Natural killer cell (primary cell): ENCODE measurements at regions of chr5 and their contacts with region 1.

Region 1: GRCh38 chr5:143403593-143404415 is at the start of gene NR3C1:
- DNase-seq: peak; percentile 87 to 95
- ATAC-seq: peak; percentile 71 to 89 (median 76)
- H3K4me3 ChIP-seq: peak within 1 kb of the TSS; percentile 77
- H3K4me3 Mint-ChIP-seq: peak within 1 kb of the TSS; percentile 97
- H3K27ac ChIP-seq: peak within 1 kb of the TSS; percentile 95
- H3K27ac Mint-ChIP-seq: peak within 1 kb of the TSS; percentile 97 to 99
- H3K4me1 ChIP-seq: peaks cover 24% of the 10 kb centered on the region
- H3K4me1 Mint-ChIP-seq: peaks cover 50 to 57% of the 10 kb centered on the region in 2 donors
- H3K27me3 ChIP-seq: no peaks in the 10 kb centered on the region
- H3K27me3 Mint-ChIP-seq: no peaks in the 10 kb centered on the region
- CTCF ChIP-seq: peak; percentile 45
- total RNA-seq, gene NR3C1: 147 to 168 (median 165) TPM

Region 2: GRCh38 chr5:142922223-142922952 is 481.4 kb before region 1 on chr5:
- intact Hi-C with region 1: loop called (anchors 5 kb)
- DNase-seq: peak in 1 of 2 donors; percentile 60
- ATAC-seq: peak; percentile 52 to 66 (median 59)
- H3K4me3 ChIP-seq: no peak overlapping the region
- H3K4me3 Mint-ChIP-seq: no peak overlapping the region
- H3K27ac ChIP-seq: peak overlapping the region; percentile 0
- H3K27ac Mint-ChIP-seq: peak overlapping the region; percentile 86 to 98
- H3K4me1 ChIP-seq: peaks cover 28% of the 10 kb centered on the region
- H3K4me1 Mint-ChIP-seq: peaks cover 52 to 53% of the 10 kb centered on the region in 2 donors
- H3K27me3 ChIP-seq: no peaks in the 10 kb centered on the region
- H3K27me3 Mint-ChIP-seq: no peaks in the 10 kb centered on the region
- CTCF ChIP-seq: peak; percentile 49

Region 3: DNA sequence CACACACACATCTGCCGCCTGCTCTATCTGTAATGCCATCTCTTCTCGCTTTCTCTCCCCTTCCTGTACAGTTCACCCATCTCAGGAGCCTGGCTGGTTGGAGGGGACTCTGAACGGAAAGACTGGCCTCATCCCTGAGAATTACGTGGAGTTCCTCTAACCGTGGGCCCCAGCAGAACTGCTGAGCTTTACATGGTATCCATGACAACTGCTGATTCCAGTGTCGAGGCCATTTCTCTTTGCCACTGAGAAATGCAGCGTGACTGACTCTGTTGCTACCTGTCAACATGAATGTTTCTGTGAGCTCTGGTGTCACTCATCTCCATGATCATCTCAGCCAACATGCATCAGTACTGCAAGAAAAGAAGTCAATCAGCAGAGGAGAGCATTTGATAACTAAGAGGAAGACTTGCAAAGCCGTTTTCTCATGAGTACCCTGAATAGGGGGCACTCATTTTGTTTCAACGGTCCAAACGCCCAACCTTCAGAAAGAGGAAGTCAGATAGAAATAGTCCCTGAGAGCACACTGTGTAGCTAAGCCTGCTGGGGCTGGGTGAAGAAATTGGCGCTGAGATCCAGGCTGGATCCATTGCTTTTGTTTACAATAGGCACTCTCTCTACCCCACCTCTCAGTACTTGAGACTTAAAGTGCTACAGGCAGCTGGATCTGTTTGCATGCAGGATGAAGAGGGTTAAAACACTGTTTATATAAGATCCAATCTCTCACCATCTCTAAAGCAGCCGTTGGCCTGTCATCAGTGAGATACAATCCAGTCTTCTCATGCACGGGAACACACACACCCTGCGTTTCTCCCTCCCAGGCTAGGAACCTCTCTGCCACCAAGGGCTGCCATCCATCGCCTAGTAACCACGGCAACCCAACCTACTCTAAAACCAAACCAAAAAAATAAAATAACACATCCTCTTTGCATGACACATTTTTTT is 181.2 kb before region 1 on chr5:
- intact Hi-C with region 1: loop called (anchors 2 kb)
- DNase-seq: peak; percentile 60 to 89
- ATAC-seq: peak; percentile 77 to 80 (median 80)
- H3K4me3 ChIP-seq: no peak overlapping the region
- H3K4me3 Mint-ChIP-seq: peak overlapping the region; percentile 70
- H3K27ac ChIP-seq: peak overlapping the region; percentile 86
- H3K27ac Mint-ChIP-seq: peak overlapping the region; percentile 92 to 95
- H3K4me1 ChIP-seq: peaks cover 30% of the 10 kb centered on the region
- H3K4me1 Mint-ChIP-seq: peaks cover 69 to 70% of the 10 kb centered on the region in 2 donors
- H3K27me3 ChIP-seq: no peaks in the 10 kb centered on the region
- H3K27me3 Mint-ChIP-seq: no peaks in the 10 kb centered on the region
- CTCF ChIP-seq: no peak

Region 4: DNA sequence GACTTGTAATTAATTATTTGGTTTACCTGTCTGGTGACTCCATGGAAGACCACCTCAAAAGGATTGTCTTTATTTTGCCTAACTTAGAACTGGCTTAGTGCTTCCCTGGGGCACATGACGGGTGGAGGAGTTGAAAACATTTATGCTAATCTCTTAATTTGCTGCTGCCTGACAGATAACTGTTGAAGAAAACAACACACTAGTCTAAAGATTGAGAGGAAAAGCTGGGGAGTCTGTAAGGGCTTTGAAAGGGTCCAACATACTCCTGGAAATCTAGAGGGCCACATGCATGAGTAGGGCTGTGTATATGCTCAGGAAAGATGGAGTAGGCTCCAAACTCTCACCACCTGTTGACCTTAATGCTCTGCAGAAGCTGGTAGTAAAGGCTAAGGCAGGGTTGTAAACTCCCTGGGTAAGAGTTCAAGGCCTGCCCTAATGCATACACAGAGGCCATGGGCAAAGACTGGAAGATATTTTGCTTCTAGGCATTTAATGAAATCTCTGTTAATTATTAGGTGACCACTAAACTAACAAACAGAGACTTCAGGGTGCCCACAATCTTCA is 41.1 kb before region 1 on chr5:
- intact Hi-C with region 1: no loop called
- DNase-seq: no peak
- ATAC-seq: no peak
- H3K4me3 ChIP-seq: no peak overlapping the region
- H3K4me3 Mint-ChIP-seq: no peak overlapping the region
- H3K27ac ChIP-seq: no peak overlapping the region
- H3K27ac Mint-ChIP-seq: peak overlapping the region; percentile 3 to 63
- H3K4me1 ChIP-seq: peaks cover 10% of the 10 kb centered on the region
- H3K4me1 Mint-ChIP-seq: peaks cover 83 to 87% of the 10 kb centered on the region in 2 donors
- H3K27me3 ChIP-seq: no peaks in the 10 kb centered on the region
- H3K27me3 Mint-ChIP-seq: no peaks in the 10 kb centered on the region
- CTCF ChIP-seq: no peak

Region 5: DNA sequence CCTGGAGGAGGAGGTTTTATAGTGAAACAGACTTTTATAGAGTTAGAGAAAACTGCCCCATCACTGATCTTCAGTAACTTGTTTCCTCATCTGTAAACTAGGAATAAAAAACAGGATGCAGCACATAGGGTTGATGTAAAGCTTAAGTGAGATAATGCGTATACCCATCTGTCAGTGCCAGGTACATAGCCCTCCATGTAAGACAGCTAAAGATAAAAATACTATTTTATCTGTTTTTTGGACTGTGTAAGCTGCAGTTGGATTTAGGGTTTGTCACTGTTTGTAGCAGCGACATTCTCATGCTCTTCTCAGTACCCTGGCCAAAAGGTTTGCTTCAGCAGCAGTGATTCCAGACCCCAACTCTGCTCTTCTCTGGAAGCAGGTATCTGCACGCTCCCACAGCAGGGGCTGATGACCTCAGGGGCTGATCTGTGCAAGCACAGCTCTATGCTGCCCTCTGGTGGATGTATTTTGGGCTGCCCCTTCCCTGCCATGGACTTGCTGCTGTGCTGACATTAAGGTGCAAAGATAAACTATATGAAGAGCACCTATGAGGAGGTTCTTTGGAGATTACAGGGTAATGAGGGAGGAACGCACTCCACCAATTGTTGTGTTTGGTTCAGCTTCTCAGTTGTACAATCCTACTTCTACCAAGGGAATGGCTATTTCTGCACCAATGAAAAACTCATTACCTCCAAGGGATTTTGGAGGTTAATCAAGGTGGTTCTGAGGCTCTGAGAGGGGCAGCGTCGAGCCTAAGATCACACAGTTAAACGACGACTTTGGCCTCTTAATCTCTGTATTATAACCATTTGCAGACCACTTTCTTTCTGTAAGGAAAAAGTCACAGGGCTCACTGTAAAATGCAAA is 421.3 kb after region 1 on chr5:
- intact Hi-C with region 1: loop called (anchors 10 kb)
- DNase-seq: peak; percentile 76 to 92
- ATAC-seq: peak; percentile 88 to 98 (median 97)
- H3K4me3 ChIP-seq: no peak overlapping the region
- H3K4me3 Mint-ChIP-seq: no peak overlapping the region
- H3K27ac ChIP-seq: no peak overlapping the region
- H3K27ac Mint-ChIP-seq: no peak overlapping the region
- H3K4me1 ChIP-seq: peaks cover 6% of the 10 kb centered on the region
- H3K4me1 Mint-ChIP-seq: peaks cover 8 to 9% of the 10 kb centered on the region in 2 donors
- H3K27me3 ChIP-seq: no peaks in the 10 kb centered on the region
- H3K27me3 Mint-ChIP-seq: no peaks in the 10 kb centered on the region
- CTCF ChIP-seq: peak; percentile 94